CD8-positive, alpha-beta memory T cell (primary cell): ENCODE measurements at regions of chr10 and their contacts with region 1.

Region 1: DNA sequence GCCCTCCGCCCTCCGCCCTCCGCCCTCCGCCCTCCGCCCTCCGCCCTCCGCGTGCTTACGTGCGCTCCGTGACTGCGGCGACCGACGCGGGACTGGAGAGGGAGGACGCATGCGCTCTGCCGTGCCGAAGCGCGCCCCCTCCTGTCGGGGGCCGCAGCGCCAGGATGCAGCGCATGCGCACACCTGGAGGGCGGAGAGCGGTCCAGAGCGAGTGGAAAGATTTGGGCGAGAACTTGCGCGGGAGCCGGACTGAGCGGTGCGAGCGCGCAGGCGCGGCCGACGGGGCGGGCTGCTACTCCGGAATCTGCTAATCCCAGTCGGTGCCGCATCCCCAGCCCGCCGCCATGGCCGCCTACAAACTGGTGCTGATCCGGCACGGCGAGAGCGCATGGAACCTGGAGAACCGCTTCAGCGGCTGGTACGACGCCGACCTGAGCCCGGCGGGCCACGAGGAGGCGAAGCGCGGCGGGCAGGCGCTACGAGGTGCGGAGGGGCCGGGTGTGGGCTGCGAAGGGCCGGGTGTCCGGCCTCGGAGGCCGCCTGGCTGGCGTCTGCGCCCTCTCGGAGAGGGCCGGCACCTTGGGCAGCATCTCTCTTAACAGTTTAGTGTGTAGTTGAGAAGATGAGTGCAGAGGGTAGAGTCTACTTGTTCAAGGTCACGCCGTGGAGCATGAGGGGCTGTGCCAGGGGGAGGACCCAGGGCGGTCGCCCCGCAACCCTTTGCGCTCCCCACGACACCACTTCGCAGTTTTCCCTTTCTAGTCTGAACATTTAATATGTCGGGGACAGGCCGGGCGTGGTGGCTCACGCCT is at the start of gene PGAM1:
- DNase-seq: peak; percentile 93 to 98 (median 97)
- H3K4me3 ChIP-seq: peak within 1 kb of the TSS; percentile 92
- H3K4me3 Mint-ChIP-seq: peak within 1 kb of the TSS; percentile 89 to 96 (median 92)
- H3K27ac ChIP-seq: peak within 1 kb of the TSS; percentile 91
- H3K27ac Mint-ChIP-seq: peak within 1 kb of the TSS; percentile 88 to 97 (median 94)
- H3K4me1 ChIP-seq: peaks cover 27% of the 10 kb centered on the region
- H3K4me1 Mint-ChIP-seq: peaks cover 34 to 51% (median 41%) of the 10 kb centered on the region in 3 donors
- H3K27me3 ChIP-seq: no peaks in the 10 kb centered on the region
- H3K27me3 Mint-ChIP-seq: peaks cover 0 to 3% of the 10 kb centered on the region in 2 donors
- total RNA-seq, gene PGAM1: 1,086 to 1,097 TPM

Region 2: DNA sequence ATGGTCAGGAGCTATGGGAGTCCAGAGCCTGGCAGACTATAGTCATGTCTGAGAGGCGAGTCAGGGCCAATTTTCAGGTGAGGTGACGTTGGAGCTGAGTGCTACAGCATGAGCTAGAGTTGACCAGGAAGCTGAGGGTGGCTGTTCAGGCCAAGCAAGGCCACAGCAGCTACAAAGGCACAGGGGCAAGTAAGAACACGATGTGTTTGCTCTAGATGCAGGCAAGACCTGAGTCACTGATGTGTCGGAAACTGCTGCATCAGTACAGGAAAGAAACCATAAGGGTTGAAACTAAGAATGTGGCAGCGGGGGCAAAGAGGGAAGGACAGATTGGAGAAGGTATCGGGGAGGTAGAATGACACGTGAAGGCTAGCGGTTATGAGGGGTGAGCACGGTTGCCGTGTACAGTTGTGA is 13.3 kb before region 1 on chr10:
- CTCF ChIA-PET with region 1: interaction called, 13 read pairs
- POLR2A ChIA-PET with region 1: interaction called, 5 read pairs
- DNase-seq: no peak
- H3K4me3 ChIP-seq: no peak overlapping the region
- H3K4me3 Mint-ChIP-seq: peak overlapping the region in 4 of 7 donors; percentile 1 to 49 (median 18)
- H3K27ac ChIP-seq: no peak overlapping the region
- H3K27ac Mint-ChIP-seq: peak overlapping the region; percentile 3 to 93 (median 77)
- H3K4me1 ChIP-seq: peaks cover 27% of the 10 kb centered on the region
- H3K4me1 Mint-ChIP-seq: peaks cover 35 to 43% (median 40%) of the 10 kb centered on the region in 3 donors
- H3K27me3 ChIP-seq: no peaks in the 10 kb centered on the region
- H3K27me3 Mint-ChIP-seq: no peaks in the 10 kb centered on the region

Region 3: GRCh38 chr10:97534746-97535367 is 108.7 kb after region 1 on chr10:
- CTCF ChIA-PET with region 1: no interaction called
- POLR2A ChIA-PET with region 1: no interaction called
- DNase-seq: no peak
- H3K4me3 ChIP-seq: no peak overlapping the region
- H3K4me3 Mint-ChIP-seq: no peak overlapping the region
- H3K27ac ChIP-seq: no peak overlapping the region
- H3K27ac Mint-ChIP-seq: no peak overlapping the region
- H3K4me1 ChIP-seq: no peaks in the 10 kb centered on the region
- H3K4me1 Mint-ChIP-seq: no peaks in the 10 kb centered on the region
- H3K27me3 ChIP-seq: no peaks in the 10 kb centered on the region
- H3K27me3 Mint-ChIP-seq: peaks cover 0 to 5% of the 10 kb centered on the region in 2 donors